ENCODE measurements at regions of chrX and their contacts with region 1.

Region 1: GRCh38 chrX:120477453-120477852 is 8.4 kb upstream of the LAMP2 start:
- DNase-seq: no peak
- ATAC-seq: no peak
- H3K4me3 ChIP-seq: no peak overlapping the region
- H3K27ac ChIP-seq: no peak overlapping the region
- H3K4me1 ChIP-seq: no peaks in the 10 kb centered on the region
- H3K27me3 ChIP-seq: no peaks in the 10 kb centered on the region
- CTCF ChIP-seq: no peak
- EP300 ChIP-seq: no peak
- POLR2A ChIP-seq: no peak
- RAD21 ChIP-seq: no peak

Region 2: DNA sequence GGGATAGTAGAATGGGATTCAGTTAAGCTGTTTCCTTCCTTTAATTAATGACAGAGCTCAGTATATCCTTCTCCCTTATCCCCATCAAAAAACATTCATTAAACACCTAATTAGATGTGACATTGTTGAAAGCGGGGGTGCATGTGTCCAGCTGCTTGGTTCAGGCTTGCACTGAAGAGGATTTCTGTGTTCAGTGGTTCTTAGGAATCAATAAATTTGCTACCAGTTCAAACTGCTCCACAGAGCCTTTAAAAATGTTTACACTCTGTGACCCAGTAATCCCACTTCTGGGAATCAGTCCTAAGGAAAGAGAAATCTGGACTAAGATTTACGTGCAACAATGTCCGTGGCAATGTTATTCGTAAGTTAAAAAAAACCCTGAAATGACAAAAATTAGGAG is 159.0 kb before region 1 on chrX:
- CTCF ChIA-PET with region 1: interaction called, 3 read pairs
- POLR2A ChIA-PET with region 1: no interaction called
- in situ Hi-C with region 1: no loop called
- intact Hi-C with region 1: loop called (anchors 2 kb)
- DNase-seq: no peak
- ATAC-seq: no peak
- H3K4me3 ChIP-seq: no peak overlapping the region
- H3K27ac ChIP-seq: no peak overlapping the region
- H3K4me1 ChIP-seq: no peaks in the 10 kb centered on the region
- H3K27me3 ChIP-seq: peaks cover 3 to 5% of the 10 kb centered on the region in 2 experiments; a peak in 2 of 5 replicates
- CTCF ChIP-seq: no peak
- EP300 ChIP-seq: no peak
- POLR2A ChIP-seq: no peak
- RAD21 ChIP-seq: no peak

Region 3: DNA sequence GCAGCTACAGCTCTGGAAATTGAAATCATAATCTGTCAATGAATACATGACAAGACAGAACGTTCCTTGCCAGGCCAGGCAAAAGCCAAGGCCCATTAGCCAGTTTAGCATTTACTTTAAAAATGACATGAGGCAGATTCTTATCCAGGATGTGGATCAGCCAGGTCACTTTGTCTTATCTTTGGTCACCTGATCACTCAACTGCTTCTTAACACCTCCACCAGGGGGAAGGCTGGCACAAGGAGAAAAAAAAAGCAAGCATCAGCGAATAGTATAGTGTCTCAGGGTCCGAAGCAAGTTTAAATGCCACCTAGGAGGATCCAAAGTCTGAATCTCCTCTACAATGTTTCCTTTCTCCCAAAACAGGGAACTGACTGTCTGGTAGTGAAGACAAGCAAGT is 96.8 kb before region 1 on chrX:
- CTCF ChIA-PET with region 1: interaction called, 5 read pairs
- POLR2A ChIA-PET with region 1: no interaction called
- in situ Hi-C with region 1: no loop called
- intact Hi-C with region 1: loop called (anchors 5 kb)
- DNase-seq: peak in 1 of 4 experiments; percentile 6
- ATAC-seq: no peak; the same call in 2 of the 3 replicates
- H3K4me3 ChIP-seq: no peak overlapping the region
- H3K27ac ChIP-seq: no peak overlapping the region
- H3K4me1 ChIP-seq: no peaks in the 10 kb centered on the region
- H3K27me3 ChIP-seq: peaks cover 0 to 7% of the 10 kb centered on the region in 2 experiments; a peak in 1 of 5 replicates
- CTCF ChIP-seq: peak; percentile 28 to 40 (median 29); a peak in 3 of 6 replicates
- EP300 ChIP-seq: no peak
- POLR2A ChIP-seq: no peak
- RAD21 ChIP-seq: peak in 1 of 2 experiments; percentile 38; a peak in 2 of 4 replicates